CD14-positive monocyte (primary cell): ENCODE measurements at regions of chr2 and their contacts with region 1.

Region 1: DNA sequence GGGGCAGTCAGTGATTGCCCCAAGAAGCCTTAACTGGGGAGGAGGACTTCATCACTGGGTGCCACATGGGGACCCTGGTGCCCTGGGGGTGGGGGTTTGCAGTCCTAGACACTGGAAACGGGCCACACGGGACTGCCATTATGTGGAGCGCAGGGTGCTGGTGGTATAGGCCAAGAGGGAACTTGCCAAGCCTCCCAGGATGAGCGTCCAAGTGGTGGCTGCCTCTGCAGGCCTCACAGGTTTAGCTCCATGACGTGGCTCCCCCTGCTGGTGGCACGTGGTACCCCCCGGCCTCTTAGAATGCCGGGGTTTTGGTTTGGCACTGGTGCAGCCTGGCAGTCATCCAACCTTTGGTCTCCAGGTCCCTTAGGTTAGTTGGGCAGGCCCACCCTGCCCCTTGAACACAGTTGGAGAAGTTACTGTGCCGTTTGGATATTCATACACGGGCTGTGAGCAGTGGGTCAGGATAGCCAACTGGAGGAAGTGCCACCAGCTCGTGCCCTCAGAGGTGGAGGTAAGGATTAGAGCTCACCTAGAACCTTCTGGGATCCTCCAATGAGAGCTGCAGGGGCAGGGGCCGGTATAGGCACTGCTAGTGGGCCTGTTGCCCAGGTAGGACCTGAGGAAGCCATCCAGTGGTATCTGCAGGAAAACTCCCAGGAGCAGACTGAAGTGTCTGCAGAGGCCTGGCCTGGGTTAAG is 5.6 kb downstream of the PTMA start:
- DNase-seq: peak; percentile 90 to 91 (median 90)
- H3K4me3 ChIP-seq: no peak overlapping the region
- H3K4me3 Mint-ChIP-seq: peak overlapping the region; percentile 4 to 65
- H3K27ac ChIP-seq: peak overlapping the region; percentile 42 to 51
- H3K27ac Mint-ChIP-seq: peak overlapping the region; percentile 90 to 100 (median 94)
- H3K4me1 ChIP-seq: peaks cover 36 to 43% of the 10 kb centered on the region in 2 donors
- H3K4me1 Mint-ChIP-seq: peaks cover 38% of the 10 kb centered on the region
- H3K27me3 ChIP-seq: no peaks in the 10 kb centered on the region
- H3K27me3 Mint-ChIP-seq: peaks cover 0 to 9% (median 0%) of the 10 kb centered on the region in 3 donors
- CTCF ChIP-seq: peak; percentile 95

Region 2: GRCh38 chr2:231563378-231563961 is 150.4 kb before region 1 on chr2:
- intact Hi-C with region 1: loop called in 1 of 2 experiments (anchors 5 kb)
- DNase-seq: peak; percentile 34 to 57 (median 43)
- H3K4me3 ChIP-seq: no peak overlapping the region
- H3K4me3 Mint-ChIP-seq: no peak overlapping the region
- H3K27ac ChIP-seq: no peak overlapping the region
- H3K27ac Mint-ChIP-seq: no peak overlapping the region
- H3K4me1 ChIP-seq: no peaks in the 10 kb centered on the region
- H3K4me1 Mint-ChIP-seq: no peaks in the 10 kb centered on the region
- H3K27me3 ChIP-seq: no peaks in the 10 kb centered on the region
- H3K27me3 Mint-ChIP-seq: peaks cover 0 to 3% (median under 1%) of the 10 kb centered on the region in 3 donors
- CTCF ChIP-seq: peak; percentile 78

Region 3: GRCh38 chr2:231648587-231649174 is 65.2 kb before region 1 on chr2:
- intact Hi-C with region 1: loop called in 1 of 2 experiments (anchors 1 kb)
- DNase-seq: peak; percentile 48 to 75 (median 73)
- H3K4me3 ChIP-seq: no peak overlapping the region
- H3K4me3 Mint-ChIP-seq: no peak overlapping the region
- H3K27ac ChIP-seq: no peak overlapping the region
- H3K27ac Mint-ChIP-seq: no peak overlapping the region
- H3K4me1 ChIP-seq: peaks cover 10 to 11% of the 10 kb centered on the region in 2 donors
- H3K4me1 Mint-ChIP-seq: peaks cover 12% of the 10 kb centered on the region
- H3K27me3 ChIP-seq: no peaks in the 10 kb centered on the region
- H3K27me3 Mint-ChIP-seq: peaks cover 0 to 3% (median 2%) of the 10 kb centered on the region in 3 donors
- CTCF ChIP-seq: peak; percentile 78

Region 4: GRCh38 chr2:231677632-231678104 is 36.2 kb before region 1 on chr2:
- intact Hi-C with region 1: loop called (anchors 1 to 5 kb)
- DNase-seq: peak; percentile 83 to 88 (median 83)
- H3K4me3 ChIP-seq: no peak overlapping the region
- H3K4me3 Mint-ChIP-seq: peak overlapping the region in 1 of 2 donors; percentile 35
- H3K27ac ChIP-seq: no peak overlapping the region
- H3K27ac Mint-ChIP-seq: no peak overlapping the region
- H3K4me1 ChIP-seq: peaks cover 23 to 46% of the 10 kb centered on the region in 2 donors
- H3K4me1 Mint-ChIP-seq: peaks cover 39% of the 10 kb centered on the region
- H3K27me3 ChIP-seq: peaks cover 0 to 5% of the 10 kb centered on the region in 2 donors
- H3K27me3 Mint-ChIP-seq: peaks cover 2 to 6% (median 3%) of the 10 kb centered on the region in 3 donors
- CTCF ChIP-seq: peak; percentile 93